ENCODE measurements at regions of chr2 and their contacts with region 1.

Region 1: DNA sequence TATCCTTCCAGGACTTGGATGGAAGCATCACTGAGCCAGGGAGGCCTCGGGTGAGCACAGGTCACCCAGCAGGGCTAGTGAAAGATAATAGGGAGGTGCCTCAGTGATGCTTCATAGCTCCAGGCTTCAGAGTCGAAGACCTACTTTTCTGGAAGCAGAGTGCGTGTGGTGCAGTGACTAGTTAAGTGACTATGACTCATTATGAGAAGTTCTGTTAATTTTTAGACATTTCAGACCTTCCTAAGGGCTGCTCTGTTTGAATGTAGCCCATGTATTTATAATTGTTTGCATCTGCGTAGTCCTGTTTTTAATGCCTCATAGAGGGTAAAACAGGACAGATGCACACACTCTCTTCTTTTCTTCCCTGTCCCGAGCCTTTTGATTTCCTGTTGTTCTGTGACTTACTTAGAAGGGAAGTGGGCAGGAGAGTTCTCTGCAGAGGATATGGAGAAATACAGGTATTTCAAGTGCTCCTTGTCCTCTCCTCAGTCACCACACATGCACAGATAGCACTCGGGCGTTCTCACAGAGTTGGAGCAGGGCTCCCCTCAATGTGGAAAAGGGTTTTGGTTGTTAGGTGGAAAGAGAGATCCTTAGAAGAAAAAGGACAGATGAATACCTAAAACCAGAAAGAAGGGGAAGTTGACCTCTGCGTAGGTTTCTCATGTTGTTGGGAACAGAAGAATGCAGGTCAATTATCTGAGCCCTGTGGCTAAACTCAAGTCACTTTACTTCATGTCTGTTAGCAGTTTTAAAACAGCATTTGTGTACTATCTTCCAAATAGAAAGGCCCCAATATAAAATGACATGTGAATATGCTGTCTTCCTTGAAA is 34.7 kb downstream of the RALB start:
- DNase-seq: peak; percentile 16
- H3K4me3 Mint-ChIP-seq: peak overlapping the region; percentile 49
- H3K27ac Mint-ChIP-seq: peak overlapping the region; percentile 91
- H3K4me1 Mint-ChIP-seq: peaks cover 68% of the 10 kb centered on the region
- H3K27me3 Mint-ChIP-seq: no peaks in the 10 kb centered on the region

Region 2: DNA sequence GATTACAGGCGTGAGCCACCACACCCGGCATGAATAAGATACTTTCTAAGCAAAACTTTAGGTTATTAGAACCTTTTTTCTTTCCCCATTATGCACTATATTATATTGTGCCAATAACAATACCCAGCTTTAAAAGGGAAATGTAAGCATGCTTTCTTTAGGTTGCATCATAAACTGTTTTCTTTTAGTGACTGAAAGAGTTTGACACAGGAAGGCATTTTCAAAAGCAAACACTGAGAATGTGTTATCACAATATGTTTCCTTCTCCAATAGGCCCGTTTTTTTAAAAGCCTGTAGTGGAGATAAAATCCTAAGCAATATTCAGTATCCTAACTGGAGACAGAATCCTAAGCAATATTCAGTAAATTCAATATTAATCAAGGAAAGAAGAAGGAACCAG is 291.3 kb before region 1 on chr2:
- intact Hi-C with region 1: no loop called
- DNase-seq: no peak
- H3K4me3 Mint-ChIP-seq: no peak overlapping the region
- H3K27ac Mint-ChIP-seq: no peak overlapping the region
- H3K4me1 Mint-ChIP-seq: no peaks in the 10 kb centered on the region
- H3K27me3 Mint-ChIP-seq: peaks cover 7% of the 10 kb centered on the region

Region 3: DNA sequence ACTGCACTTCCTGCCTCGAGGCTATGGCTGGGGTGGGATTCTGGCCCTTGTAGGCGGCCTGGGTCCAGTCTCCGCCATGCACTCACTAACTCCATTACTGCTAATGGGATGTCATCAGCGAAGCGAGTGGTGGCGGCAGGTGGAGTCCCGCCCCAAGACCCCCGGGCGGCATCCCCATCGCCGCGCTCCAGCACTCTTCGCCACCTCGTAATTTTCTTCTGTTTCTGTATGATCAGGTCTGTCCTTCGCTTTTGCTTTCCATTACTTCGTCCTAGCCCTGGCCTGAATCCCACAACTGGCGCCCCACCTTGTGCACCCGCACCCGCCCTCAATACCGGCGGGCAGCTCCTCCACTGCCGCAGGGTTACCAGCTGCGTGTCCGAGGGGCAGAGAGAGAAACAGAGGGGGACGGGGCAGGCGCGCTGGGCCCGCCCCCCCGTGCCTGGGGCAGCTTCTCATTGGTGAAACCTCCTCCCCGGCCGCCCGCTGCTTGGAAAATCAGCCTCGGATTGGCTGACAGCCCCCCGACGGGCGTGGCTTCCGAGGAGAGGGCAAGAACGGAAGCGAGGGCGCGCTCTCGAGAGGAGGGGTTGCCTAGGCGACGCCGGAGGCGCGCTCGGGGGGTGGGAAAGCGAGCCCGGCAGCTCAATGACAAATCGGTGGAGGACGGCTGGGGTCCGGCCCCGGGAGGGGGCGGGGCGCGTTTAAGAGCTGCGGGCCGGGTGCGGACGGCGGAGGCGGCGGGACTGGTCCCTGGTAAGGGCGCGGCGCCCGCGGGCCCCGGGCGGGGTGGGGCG is 35.0 kb before region 1 on chr2 and contains the start of gene RALB:
- intact Hi-C with region 1: loop called (anchors 1 kb)
- DNase-seq: peak; percentile 99
- H3K4me3 Mint-ChIP-seq: peak within 1 kb of the TSS; percentile 100
- H3K27ac Mint-ChIP-seq: peak within 1 kb of the TSS; percentile 93
- H3K4me1 Mint-ChIP-seq: peaks cover 53% of the 10 kb centered on the region
- H3K27me3 Mint-ChIP-seq: peaks cover 8% of the 10 kb centered on the region
- total RNA-seq, gene RALB: 58.4 and 65.0 TPM in 2 replicates

Region 4: DNA sequence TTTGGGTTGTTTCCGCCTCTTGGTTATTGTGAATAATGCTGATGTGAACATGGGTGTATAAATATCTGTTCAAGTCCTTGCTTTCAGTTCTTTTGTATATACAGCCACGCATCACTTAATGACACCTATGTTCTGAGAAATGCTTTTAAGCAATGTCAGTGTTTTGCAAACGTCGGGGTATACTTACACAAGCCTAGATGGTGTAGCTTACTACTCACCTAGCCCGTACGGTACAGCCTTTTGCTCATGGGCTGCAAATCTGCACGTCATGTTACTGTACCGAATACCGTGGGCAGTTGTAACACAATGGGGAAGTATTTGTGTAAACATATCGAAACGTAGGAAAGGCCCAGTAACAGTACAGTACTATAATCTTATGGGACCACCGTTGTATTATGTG is 22.4 kb before region 1 on chr2:
- intact Hi-C with region 1: loop called (anchors 1 kb)
- DNase-seq: no peak
- H3K4me3 Mint-ChIP-seq: no peak overlapping the region
- H3K27ac Mint-ChIP-seq: no peak overlapping the region
- H3K4me1 Mint-ChIP-seq: peaks cover 31% of the 10 kb centered on the region
- H3K27me3 Mint-ChIP-seq: no peaks in the 10 kb centered on the region

Region 5: DNA sequence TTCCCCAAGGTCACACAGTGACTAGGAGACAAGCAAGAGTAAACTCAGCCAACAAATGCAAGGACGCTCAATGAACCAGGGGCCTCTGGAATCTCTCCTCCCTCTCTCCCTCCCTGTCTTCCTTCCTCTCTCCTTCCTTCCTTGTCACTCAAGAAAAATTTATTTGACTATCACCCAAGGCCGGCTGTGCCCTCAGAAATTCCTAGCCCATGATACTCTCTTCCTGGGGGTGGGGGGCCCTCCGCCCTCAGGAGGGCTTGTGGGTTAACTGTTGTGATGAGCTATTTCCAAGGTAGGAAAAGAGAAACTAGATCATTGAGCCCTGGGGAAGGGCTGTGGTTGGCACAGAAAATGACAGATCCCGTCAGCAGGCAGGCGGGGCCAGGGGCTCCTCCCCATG is 80.2 kb after region 1 on chr2:
- intact Hi-C with region 1: no loop called
- DNase-seq: no peak
- H3K4me3 Mint-ChIP-seq: no peak overlapping the region
- H3K27ac Mint-ChIP-seq: no peak overlapping the region
- H3K4me1 Mint-ChIP-seq: no peaks in the 10 kb centered on the region
- H3K27me3 Mint-ChIP-seq: peaks cover 10% of the 10 kb centered on the region